CD8-positive, alpha-beta T cell (primary cell): ENCODE measurements at regions of chr18 and their contacts with region 1.

Region 1: GRCh38 chr18:9516437-9517064 is 41.2 kb downstream of the RALBP1 start:
- DNase-seq: peak in 2 of 9 experiments; percentile 45 to 61
- ATAC-seq: peak; percentile 73
- H3K4me3 ChIP-seq: no peak overlapping the region
- H3K4me3 Mint-ChIP-seq: no peak overlapping the region
- H3K27ac ChIP-seq: no peak overlapping the region
- H3K27ac Mint-ChIP-seq: no peak overlapping the region
- H3K4me1 ChIP-seq: no peaks in the 10 kb centered on the region
- H3K4me1 Mint-ChIP-seq: peaks cover 12% of the 10 kb centered on the region
- H3K27me3 ChIP-seq: no peaks in the 10 kb centered on the region
- H3K27me3 Mint-ChIP-seq: no peaks in the 10 kb centered on the region
- CTCF ChIP-seq: peak; percentile 90

Region 2: GRCh38 chr18:8654503-8655451 is 861.8 kb before region 1 on chr18:
- CTCF ChIA-PET with region 1: interaction called, 3 read pairs
- POLR2A ChIA-PET with region 1: no interaction called
- intact Hi-C with region 1: loop called in 1 of 2 experiments (anchors 2 kb)
- DNase-seq: peak in 2 of 9 experiments; percentile 26 to 41
- ATAC-seq: no peak
- H3K4me3 ChIP-seq: no peak overlapping the region
- H3K4me3 Mint-ChIP-seq: no peak overlapping the region
- H3K27ac ChIP-seq: no peak overlapping the region
- H3K27ac Mint-ChIP-seq: no peak overlapping the region
- H3K4me1 ChIP-seq: no peaks in the 10 kb centered on the region
- H3K4me1 Mint-ChIP-seq: no peaks in the 10 kb centered on the region
- H3K27me3 ChIP-seq: no peaks in the 10 kb centered on the region
- H3K27me3 Mint-ChIP-seq: peaks cover 5% of the 10 kb centered on the region
- CTCF ChIP-seq: peak; percentile 98

Region 3: DNA sequence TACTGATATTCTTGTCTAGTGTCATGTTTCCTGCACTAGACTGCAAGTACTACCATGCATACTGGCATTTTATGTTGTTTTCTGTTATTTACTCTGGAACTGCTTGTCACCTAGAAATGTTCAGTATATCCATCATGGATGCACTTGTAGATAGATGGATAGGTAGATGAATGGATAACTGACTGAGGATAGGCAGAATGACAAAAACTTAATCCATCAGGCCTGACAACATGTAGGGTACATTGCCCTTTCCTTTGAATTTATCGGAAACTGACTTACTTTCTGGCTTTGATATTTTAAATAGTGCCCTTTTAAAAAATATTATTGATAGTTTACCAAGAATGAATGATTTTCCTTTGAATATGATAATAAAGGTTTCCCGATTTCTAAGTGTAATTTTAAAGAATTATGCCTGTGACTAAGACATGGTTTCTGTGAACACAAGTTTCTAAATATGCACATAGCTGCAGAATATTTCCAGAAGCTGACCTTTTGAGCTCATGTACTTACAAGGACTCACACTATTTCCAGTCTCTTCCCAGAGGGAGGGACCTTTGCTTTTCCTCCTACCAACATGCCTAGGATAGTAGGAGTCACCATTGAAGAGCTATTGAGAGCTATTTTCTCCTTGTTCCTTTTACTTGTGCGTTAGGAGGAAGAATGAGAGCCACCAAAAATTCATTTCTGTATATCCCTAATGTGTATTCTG is 298.7 kb before region 1 on chr18:
- CTCF ChIA-PET with region 1: interaction called, 4 read pairs
- POLR2A ChIA-PET with region 1: no interaction called
- intact Hi-C with region 1: loop called in 1 of 2 experiments (anchors 5 kb)
- DNase-seq: no peak
- ATAC-seq: no peak
- H3K4me3 ChIP-seq: no peak overlapping the region
- H3K4me3 Mint-ChIP-seq: no peak overlapping the region
- H3K27ac ChIP-seq: no peak overlapping the region
- H3K27ac Mint-ChIP-seq: no peak overlapping the region
- H3K4me1 ChIP-seq: no peaks in the 10 kb centered on the region
- H3K4me1 Mint-ChIP-seq: peaks cover 5% of the 10 kb centered on the region
- H3K27me3 ChIP-seq: no peaks in the 10 kb centered on the region
- H3K27me3 Mint-ChIP-seq: no peaks in the 10 kb centered on the region
- CTCF ChIP-seq: no peak

Region 4: GRCh38 chr18:9404565-9405060 is 111.9 kb before region 1 on chr18:
- CTCF ChIA-PET with region 1: no interaction called
- POLR2A ChIA-PET with region 1: no interaction called
- intact Hi-C with region 1: loop called in 1 of 2 experiments (anchors 5 kb)
- DNase-seq: peak in 6 of 9 experiments; percentile 2 to 33 (median 12)
- ATAC-seq: peak; percentile 56
- H3K4me3 ChIP-seq: peak overlapping the region; percentile 15 to 27
- H3K4me3 Mint-ChIP-seq: peak overlapping the region; percentile 78
- H3K27ac ChIP-seq: no peak overlapping the region
- H3K27ac Mint-ChIP-seq: no peak overlapping the region
- H3K4me1 ChIP-seq: no peaks in the 10 kb centered on the region
- H3K4me1 Mint-ChIP-seq: peaks cover 14% of the 10 kb centered on the region
- H3K27me3 ChIP-seq: no peaks in the 10 kb centered on the region
- H3K27me3 Mint-ChIP-seq: no peaks in the 10 kb centered on the region
- CTCF ChIP-seq: no peak

Region 5: DNA sequence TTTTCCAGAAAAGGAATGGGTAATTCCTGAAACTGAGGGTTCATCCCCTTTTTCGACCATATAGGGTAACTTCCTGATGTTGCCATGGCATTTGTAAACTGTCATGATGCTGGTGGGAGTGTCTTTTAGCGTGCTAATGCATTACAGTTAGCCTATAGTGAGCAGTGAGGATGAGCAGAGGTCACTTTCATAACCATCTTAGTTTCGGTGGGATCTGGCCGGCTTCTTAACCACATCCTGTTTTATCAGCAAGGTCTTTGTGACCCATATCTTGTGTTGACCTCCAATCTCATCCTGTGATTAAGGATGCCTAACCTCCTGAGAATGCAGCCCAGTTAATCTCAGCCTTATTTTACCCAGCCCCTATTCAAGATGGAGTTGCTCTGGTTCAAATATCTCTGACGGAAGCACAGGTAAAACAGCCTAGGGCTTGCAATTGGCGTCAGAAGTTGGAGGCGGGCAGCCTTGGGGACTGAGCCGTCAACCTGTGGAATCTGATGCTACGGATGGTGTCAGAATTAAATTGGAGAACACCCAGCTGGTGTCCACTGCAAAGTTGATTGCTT is 21.7 kb before region 1 on chr18:
- CTCF ChIA-PET with region 1: interaction called, 10 read pairs
- POLR2A ChIA-PET with region 1: no interaction called
- intact Hi-C with region 1: no loop called
- DNase-seq: peak in 1 of 9 experiments; percentile 43
- ATAC-seq: no peak
- H3K4me3 ChIP-seq: no peak overlapping the region
- H3K4me3 Mint-ChIP-seq: no peak overlapping the region
- H3K27ac ChIP-seq: no peak overlapping the region
- H3K27ac Mint-ChIP-seq: no peak overlapping the region
- H3K4me1 ChIP-seq: peaks cover 10% of the 10 kb centered on the region
- H3K4me1 Mint-ChIP-seq: peaks cover 41% of the 10 kb centered on the region
- H3K27me3 ChIP-seq: no peaks in the 10 kb centered on the region
- H3K27me3 Mint-ChIP-seq: no peaks in the 10 kb centered on the region
- CTCF ChIP-seq: no peak